Ascending aorta (tissue), 2 donors: ENCODE measurements at regions of chr3 and their contacts with region 1.

Region 1: DNA sequence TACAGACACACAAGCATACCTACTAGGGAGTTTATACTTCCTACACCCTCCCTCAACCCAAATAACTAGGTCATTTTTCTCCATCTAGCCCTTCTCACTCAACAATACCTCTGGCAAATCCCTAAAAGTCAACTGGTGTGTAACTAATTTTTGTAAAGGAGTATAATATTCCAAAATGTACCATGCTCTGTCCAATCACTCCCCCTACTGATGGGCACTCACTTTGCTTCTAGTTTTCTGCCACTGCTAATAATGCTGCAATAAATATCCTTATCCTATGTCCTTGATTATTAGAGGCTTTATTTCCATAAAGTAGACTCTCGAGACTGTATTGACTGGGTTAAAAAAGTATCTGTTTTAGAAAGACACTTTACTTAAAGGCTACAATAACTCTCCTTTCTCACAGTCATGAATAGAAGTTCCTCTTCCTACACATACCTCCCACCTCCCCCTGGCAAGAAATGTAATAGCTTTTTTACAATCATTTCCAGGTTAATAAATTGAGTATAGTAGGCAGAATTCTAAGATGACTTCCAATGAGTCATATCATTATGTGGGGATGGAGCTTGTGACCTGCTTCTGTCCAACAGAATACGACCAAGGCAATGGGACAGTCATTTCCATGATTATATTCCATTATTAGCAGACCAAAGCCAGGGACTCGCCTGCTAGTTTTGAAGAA is 30.0 kb downstream of the SHQ1 start:
- DNase-seq: no peak
- H3K4me3 ChIP-seq: no peak overlapping the region
- H3K27ac ChIP-seq: peak overlapping the region in 1 of 2 donors; percentile 58
- H3K4me1 ChIP-seq: peaks cover 6 to 11% of the 10 kb centered on the region in 2 donors
- H3K27me3 ChIP-seq: no peaks in the 10 kb centered on the region
- CTCF ChIP-seq: peak in 2 of 3 experiments; percentile 23 to 58

Region 2: GRCh38 chr3:71734883-71735282 is 1083.3 kb before region 1 on chr3:
- intact Hi-C with region 1: loop called (anchors 5 kb)
- DNase-seq: no peak
- H3K4me3 ChIP-seq: no peak overlapping the region
- H3K27ac ChIP-seq: no peak overlapping the region
- H3K4me1 ChIP-seq: no peaks in the 10 kb centered on the region
- H3K27me3 ChIP-seq: no peaks in the 10 kb centered on the region
- CTCF ChIP-seq: no peak

Region 3: DNA sequence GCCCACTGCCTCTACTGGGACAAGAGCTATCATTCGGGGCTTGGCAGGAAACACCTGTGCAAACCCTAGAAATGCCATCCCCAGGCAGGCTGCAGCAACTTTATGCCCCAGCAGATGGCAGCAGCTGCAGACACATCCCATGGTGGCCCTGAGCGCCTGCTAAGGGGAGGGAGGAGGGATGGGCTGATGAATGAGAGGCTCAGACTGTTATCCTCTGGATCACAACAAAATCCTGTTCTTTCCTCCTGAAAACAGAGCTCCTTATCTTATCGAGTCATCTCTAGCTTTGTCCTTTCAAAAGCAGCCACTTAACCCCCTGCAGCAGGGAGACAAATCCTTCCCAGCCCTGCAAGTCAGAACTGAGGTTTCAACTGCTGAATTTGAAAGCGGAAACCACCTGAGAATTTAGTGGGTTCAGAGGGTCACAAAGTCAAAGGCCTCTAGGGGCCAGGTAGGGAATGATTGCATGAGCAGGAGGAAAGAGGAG is 942.7 kb before region 1 on chr3:
- intact Hi-C with region 1: loop called (anchors 2 kb)
- DNase-seq: peak; percentile 22 to 74
- H3K4me3 ChIP-seq: no peak overlapping the region
- H3K27ac ChIP-seq: no peak overlapping the region
- H3K4me1 ChIP-seq: no peaks in the 10 kb centered on the region
- H3K27me3 ChIP-seq: no peaks in the 10 kb centered on the region
- CTCF ChIP-seq: peak; percentile 67 to 83 (median 73)

Region 4: GRCh38 chr3:71955240-71956068 is 862.8 kb before region 1 on chr3:
- intact Hi-C with region 1: loop called (anchors 2 kb)
- DNase-seq: peak in 1 of 2 donors; percentile 85
- H3K4me3 ChIP-seq: no peak overlapping the region
- H3K27ac ChIP-seq: no peak overlapping the region
- H3K4me1 ChIP-seq: peaks cover 0 to 2% of the 10 kb centered on the region in 2 donors
- H3K27me3 ChIP-seq: no peaks in the 10 kb centered on the region
- CTCF ChIP-seq: peak; percentile 69 to 89 (median 71)

Region 5: GRCh38 chr3:72520690-72521308 is 297.4 kb before region 1 on chr3:
- intact Hi-C with region 1: no loop called
- DNase-seq: no peak
- H3K4me3 ChIP-seq: no peak overlapping the region
- H3K27ac ChIP-seq: no peak overlapping the region
- H3K4me1 ChIP-seq: no peaks in the 10 kb centered on the region
- H3K27me3 ChIP-seq: no peaks in the 10 kb centered on the region
- CTCF ChIP-seq: no peak

Region 6: GRCh38 chr3:72665701-72666443 is 152.4 kb before region 1 on chr3:
- intact Hi-C with region 1: loop called (anchors 5 kb)
- DNase-seq: no peak
- H3K4me3 ChIP-seq: no peak overlapping the region
- H3K27ac ChIP-seq: no peak overlapping the region
- H3K4me1 ChIP-seq: peaks cover 0 to 8% of the 10 kb centered on the region in 2 donors
- H3K27me3 ChIP-seq: no peaks in the 10 kb centered on the region
- CTCF ChIP-seq: peak; percentile 24 to 48 (median 36)

Region 7: DNA sequence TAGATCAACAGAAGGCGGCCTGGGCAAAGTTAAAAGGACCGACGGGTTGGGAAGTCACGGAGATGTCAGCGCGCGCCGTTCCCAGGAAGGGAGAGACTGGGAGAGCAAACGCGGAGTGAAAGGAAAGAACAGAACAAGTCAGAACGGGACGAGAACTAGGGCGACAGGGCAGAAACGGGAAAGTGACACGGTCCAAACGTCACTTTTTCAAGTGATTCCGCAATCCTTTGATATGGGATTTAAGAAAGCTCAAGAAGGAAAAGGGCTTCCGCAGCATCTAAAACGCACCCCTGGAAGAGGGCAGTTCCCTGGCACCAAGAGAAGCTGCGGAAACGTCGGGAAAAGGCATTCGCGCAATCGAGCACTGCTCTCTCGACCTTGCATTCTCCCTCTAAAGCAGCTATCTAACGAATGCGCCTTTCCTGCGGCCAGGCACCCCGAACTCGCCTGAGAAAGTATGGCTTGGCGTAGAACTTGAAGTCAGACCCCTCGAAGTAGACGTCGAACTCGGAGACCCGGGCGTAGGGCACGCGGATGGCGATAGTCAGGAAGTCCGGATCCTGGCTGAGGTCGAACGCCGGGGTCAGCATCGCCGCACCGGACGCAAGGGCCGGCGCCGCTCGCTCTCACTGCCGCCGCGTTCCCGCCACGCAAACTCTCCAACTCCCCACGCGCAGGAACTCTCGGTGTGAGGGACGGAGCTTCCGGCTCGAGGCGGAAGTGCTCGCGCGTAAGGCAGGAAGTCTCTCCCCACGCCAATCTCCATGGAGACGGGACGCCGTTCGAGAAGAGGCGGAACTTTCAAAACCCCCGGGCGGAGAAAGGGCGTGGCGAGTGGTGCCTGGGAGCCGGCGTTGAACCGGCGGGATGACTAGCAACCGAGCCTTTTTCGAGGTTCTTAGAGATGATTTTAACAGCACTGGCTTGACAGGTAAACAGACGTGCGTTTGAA is 29.8 kb after region 1 on chr3 and contains the start of gene SHQ1:
- intact Hi-C with region 1: no loop called
- DNase-seq: peak; percentile 82 to 97
- H3K4me3 ChIP-seq: peak within 1 kb of the TSS; percentile 81 to 93
- H3K27ac ChIP-seq: peak within 1 kb of the TSS; percentile 76 to 82
- H3K4me1 ChIP-seq: peaks cover 7 to 9% of the 10 kb centered on the region in 2 donors
- H3K27me3 ChIP-seq: no peaks in the 10 kb centered on the region
- CTCF ChIP-seq: no peak
- total RNA-seq, gene SHQ1: 4.2 TPM

Region 8: GRCh38 chr3:73552719-73553118 is 734.5 kb after region 1 on chr3:
- intact Hi-C with region 1: no loop called
- DNase-seq: no peak
- H3K4me3 ChIP-seq: no peak overlapping the region
- H3K27ac ChIP-seq: no peak overlapping the region
- H3K4me1 ChIP-seq: peaks cover 0 to 28% of the 10 kb centered on the region in 2 donors
- H3K27me3 ChIP-seq: no peaks in the 10 kb centered on the region
- CTCF ChIP-seq: no peak